ENCODE measurements at regions of chr1 and their contacts with region 1.

Region 1: GRCh38 chr1:184208622-184209021 is 157.1 kb downstream of the TSEN15 start:
- DNase-seq: no peak
- ATAC-seq: no peak

Region 2: DNA sequence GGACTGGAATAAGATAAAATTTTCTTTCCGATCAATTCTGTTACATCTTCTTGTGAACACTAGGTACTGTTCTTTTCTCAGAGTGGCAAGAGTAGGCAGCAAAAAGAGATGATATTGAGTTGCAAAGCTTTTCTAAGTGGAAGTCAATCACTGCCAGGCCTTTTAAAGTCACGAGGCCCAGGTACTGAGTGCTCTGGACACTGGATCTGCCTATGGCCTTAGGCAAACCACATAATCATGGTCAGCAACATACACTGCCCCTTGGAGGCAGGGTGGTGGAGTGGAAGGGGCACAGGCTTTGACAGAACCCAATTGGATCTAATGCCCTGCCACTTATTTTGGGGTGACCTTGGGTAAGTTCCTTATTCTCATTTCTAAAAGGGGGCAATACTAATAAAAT is 115.6 kb before region 1 on chr1:
- intact Hi-C with region 1: loop called in 1 of 2 experiments (anchors 5 kb)
- DNase-seq: no peak
- ATAC-seq: no peak

Region 3: GRCh38 chr1:184260382-184260781 is 51.8 kb after region 1 on chr1:
- intact Hi-C with region 1: no loop called
- DNase-seq: no peak
- ATAC-seq: no peak

Measured in left cardiac atrium (tissue), 4 donors.